ENCODE measurements at regions of chr2 and their contacts with region 1.

Region 1: GRCh38 chr2:65064728-65065552 is 8.7 kb downstream of the CEP68 start:
- DNase-seq: peak; percentile 75
- CTCF ChIP-seq: peak; percentile 85

Region 2: GRCh38 chr2:65075605-65076344 is 10.8 kb after region 1 on chr2:
- CTCF ChIA-PET with region 1: interaction called, 30 read pairs
- POLR2A ChIA-PET with region 1: no interaction called
- DNase-seq: no peak
- CTCF ChIP-seq: no peak

Region 3: DNA sequence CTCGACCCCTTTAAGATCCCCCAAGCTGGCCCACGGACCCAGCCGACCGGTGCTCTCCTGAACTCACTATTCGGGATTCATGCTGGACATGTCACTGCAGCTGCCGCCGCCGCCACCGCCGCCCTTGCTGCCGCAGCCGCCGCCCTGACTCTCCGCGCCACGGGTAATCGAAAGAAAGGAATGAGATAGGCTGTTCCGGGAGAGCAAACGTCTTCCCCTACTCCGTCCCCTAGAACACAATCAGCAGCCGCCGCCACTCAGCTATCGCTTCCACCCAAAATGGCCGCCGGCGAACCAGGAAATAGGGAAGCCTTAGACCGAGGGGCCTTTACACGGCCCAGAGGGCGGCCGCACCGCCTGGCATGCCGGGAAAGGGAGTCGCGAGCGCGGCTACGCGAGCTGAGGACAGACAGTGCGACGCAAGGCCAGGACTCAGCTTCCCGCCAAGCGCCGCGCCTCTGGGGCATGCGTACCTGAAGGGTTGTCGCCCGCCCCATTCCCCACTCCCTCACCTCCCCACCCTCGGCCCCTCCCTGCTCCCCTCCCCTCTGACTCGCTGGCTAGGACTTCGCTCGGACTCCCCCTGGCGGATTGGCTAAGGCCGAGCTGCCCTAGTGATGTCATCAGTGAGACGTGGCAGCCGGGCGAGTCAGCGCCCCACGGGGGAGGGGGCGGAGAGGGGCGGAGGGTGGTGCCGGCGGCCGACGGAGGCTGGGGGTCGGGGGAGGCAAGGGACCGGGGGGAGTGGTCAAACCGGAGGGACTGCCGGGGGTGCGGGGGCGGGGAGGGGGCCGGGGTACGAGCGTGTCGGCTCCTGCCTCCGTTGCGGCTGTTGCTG is 65.1 kb after region 1 on chr2 and contains the start of gene RAB1A:
- CTCF ChIA-PET with region 1: interaction called, 11 read pairs
- POLR2A ChIA-PET with region 1: interaction called, 6 read pairs
- DNase-seq: peak; percentile 98
- CTCF ChIP-seq: peak; percentile 52

Region 4: GRCh38 chr2:65169760-65170136 is 104.8 kb after region 1 on chr2:
- CTCF ChIA-PET with region 1: interaction called, 34 read pairs
- POLR2A ChIA-PET with region 1: no interaction called
- DNase-seq: no peak
- CTCF ChIP-seq: no peak

Region 5: DNA sequence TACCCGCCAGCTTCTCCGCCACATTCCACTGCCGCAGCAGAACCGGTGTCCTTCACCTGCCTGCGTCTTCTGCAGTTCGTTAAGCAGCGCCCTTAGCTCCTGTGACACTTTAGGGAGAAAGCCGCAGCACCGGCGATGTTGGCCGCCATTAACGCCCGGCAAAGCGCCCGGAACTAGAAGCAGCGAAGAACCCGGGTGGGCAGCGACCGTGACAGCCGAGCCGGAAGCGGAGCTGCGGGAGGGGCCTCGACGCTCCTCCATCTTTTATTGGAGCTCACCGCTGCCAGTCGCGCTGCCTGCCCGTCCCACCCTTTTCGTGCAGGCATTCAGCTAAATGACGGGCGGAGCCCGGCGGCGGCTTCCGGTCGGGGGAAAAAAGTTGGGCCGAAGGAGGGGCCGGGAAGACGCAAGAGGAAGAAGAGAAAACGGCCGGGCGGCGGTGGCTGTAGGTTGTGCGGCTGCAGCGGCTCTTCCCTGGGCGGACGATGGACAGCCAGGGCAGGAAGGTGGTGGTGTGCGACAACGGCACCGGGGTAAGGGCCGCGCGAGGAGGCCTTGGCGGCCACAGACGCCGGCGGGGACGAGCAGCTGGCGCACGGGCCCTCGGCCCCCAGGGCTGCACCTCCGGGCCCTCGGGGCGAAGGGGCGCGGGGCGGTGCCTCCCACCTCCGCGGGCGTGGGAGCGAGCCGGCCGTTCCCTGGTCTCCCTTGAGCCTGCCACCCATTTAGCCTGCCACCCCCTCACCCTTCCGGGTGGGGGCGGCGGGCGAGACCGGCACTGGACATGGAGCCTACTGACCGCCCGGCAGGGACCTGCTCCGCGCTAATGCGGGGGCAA is 162.7 kb after region 1 on chr2 and contains the start of gene ACTR2:
- CTCF ChIA-PET with region 1: interaction called, 14 read pairs
- POLR2A ChIA-PET with region 1: interaction called, 3 read pairs
- DNase-seq: peak; percentile 94
- CTCF ChIP-seq: no peak

Measured in GM10248 (cell line).